ENCODE measurements at regions of chr21 and their contacts with region 1.

Region 1: GRCh38 chr21:31180256-31181081 is 142.2 kb upstream of the KRTAP19-8 start:
- DNase-seq: no peak
- H3K4me3 Mint-ChIP-seq: peak overlapping the region; percentile 92
- H3K27ac Mint-ChIP-seq: peak overlapping the region; percentile 98
- H3K4me1 Mint-ChIP-seq: peaks cover 70% of the 10 kb centered on the region
- H3K27me3 Mint-ChIP-seq: no peaks in the 10 kb centered on the region

Region 2: DNA sequence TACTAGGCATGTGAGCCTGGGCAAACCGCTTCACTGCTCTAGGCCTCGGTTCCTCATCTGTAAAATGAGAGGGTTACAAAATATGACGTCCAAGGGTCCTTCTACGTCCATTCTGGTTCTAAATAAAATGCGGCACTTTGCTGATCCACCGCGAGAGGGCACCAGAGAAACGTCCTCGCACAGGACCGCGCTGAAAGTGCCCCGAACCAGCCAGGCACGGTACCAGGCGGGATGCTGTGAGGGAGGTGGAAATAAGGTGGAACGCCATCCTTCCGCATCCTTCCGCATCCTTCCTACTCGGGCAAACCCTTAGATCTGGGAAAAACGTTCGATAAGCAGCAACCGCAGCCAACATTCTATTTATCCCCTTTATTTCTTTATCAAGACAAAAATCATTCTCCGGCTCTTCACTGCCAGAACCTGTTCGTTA is 81.9 kb before region 1 on chr21:
- intact Hi-C with region 1: loop called (anchors 1 kb)
- DNase-seq: peak; percentile 57
- H3K4me3 Mint-ChIP-seq: no peak overlapping the region
- H3K27ac Mint-ChIP-seq: no peak overlapping the region
- H3K4me1 Mint-ChIP-seq: peaks cover 25% of the 10 kb centered on the region
- H3K27me3 Mint-ChIP-seq: peaks cover 17% of the 10 kb centered on the region

Region 3: DNA sequence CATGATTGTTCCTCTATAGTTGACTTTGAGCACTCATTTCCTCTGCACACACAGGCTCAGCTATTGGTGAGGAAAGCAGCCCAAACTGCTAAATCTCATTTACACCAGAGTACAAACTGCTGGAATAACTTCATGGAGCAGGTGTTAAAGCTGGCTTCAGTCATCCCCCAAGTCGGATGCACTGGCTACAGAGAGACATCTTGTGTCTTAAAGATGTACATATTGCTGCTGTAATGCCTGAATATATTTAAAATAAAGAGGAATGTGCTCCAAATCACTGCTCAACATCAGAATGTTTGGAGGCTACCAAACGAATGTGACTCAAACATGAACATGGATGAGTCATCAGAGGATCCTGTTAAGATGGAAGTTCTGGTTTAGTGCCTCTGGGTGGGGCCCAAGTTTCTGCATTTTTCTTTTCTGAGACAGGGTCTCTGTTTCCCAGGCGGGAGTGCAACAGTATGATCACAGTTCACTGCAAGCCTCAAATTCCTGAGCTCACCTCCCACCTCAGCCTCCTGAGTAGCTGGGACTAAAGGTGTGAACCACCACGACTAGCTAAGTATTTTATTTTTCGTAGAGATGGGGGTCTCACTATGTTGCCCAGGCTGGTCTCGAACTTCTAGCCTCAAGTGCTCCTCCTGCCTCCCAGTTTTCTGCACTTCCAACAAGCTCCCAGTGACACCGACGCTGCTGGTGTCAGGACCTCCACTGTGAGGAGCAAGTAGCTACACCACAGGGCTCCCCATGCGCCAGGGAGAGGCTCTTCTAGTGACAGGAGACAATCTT is 63.1 kb before region 1 on chr21:
- intact Hi-C with region 1: loop called (anchors 1 kb)
- DNase-seq: no peak
- H3K4me3 Mint-ChIP-seq: no peak overlapping the region
- H3K27ac Mint-ChIP-seq: peak overlapping the region; percentile 67
- H3K4me1 Mint-ChIP-seq: peaks cover 38% of the 10 kb centered on the region
- H3K27me3 Mint-ChIP-seq: no peaks in the 10 kb centered on the region

Region 4: DNA sequence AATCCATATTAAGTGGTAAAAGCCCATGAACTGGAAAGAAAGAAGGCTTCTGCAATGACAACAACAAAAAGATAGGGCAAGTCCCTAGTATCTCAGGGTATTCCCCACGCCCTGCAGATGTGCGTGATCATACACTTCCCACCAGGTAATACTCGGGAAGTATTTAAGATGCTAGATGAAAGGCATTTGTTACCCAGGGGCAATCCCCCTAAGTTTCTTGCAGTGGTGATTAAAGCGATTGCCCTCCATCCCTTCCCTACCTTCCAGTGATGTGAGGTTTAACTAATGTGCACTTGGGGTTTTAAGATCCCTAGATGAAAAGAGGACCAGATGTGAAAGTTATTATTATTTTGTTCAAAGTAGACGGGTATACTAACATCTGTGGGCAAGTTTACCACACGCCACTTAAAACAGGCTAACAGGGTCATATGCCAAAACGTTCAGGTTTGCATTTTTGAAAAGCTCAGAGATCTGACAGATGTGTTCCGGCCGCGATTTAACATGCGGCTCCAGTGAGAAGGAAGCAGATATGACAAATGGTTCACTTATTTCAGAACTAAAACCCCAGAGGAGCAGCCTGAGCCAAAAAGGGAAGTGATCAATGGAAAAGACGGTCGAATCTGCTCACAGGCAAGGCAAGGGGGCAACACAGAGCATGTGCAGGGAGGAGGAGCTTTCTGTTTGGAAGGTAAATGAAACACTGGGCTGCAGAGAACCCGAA is 146.2 kb after region 1 on chr21:
- intact Hi-C with region 1: loop called (anchors 2 kb)
- DNase-seq: peak; percentile 37
- H3K4me3 Mint-ChIP-seq: peak overlapping the region; percentile 37
- H3K27ac Mint-ChIP-seq: peak overlapping the region; percentile 82
- H3K4me1 Mint-ChIP-seq: peaks cover 43% of the 10 kb centered on the region
- H3K27me3 Mint-ChIP-seq: no peaks in the 10 kb centered on the region

Region 5: DNA sequence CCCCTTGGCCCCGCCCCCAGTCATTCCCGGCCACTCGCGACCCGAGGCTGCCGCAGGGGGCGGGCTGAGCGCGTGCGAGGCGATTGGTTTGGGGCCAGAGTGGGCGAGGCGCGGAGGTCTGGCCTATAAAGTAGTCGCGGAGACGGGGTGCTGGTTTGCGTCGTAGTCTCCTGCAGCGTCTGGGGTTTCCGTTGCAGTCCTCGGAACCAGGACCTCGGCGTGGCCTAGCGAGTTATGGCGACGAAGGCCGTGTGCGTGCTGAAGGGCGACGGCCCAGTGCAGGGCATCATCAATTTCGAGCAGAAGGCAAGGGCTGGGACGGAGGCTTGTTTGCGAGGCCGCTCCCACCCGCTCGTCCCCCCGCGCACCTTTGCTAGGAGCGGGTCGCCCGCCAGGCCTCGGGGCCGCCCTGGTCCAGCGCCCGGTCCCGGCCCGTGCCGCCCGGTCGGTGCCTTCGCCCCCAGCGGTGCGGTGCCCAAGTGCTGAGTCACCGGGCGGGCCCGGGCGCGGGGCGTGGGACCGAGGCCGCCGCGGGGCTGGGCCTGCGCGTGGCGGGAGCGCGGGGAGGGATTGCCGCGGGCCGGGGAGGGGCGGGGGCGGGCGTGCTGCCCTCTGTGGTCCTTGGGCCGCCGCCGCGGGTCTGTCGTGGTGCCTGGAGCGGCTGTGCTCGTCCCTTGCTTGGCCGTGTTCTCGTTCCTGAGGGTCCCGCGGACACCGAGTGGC is 479.2 kb after region 1 on chr21 and contains the start of gene SOD1:
- intact Hi-C with region 1: loop called (anchors 5 kb)
- DNase-seq: peak; percentile 96
- H3K4me3 Mint-ChIP-seq: peak within 1 kb of the TSS; percentile 99
- H3K27ac Mint-ChIP-seq: peak within 1 kb of the TSS; percentile 100
- H3K4me1 Mint-ChIP-seq: peaks cover 76% of the 10 kb centered on the region
- H3K27me3 Mint-ChIP-seq: no peaks in the 10 kb centered on the region
- total RNA-seq, gene SOD1: 346 and 354 TPM in 2 replicates